Sigmoid colon (tissue), 7 donors: ENCODE measurements at regions of chr9 and their contacts with region 1.

Region 1: DNA sequence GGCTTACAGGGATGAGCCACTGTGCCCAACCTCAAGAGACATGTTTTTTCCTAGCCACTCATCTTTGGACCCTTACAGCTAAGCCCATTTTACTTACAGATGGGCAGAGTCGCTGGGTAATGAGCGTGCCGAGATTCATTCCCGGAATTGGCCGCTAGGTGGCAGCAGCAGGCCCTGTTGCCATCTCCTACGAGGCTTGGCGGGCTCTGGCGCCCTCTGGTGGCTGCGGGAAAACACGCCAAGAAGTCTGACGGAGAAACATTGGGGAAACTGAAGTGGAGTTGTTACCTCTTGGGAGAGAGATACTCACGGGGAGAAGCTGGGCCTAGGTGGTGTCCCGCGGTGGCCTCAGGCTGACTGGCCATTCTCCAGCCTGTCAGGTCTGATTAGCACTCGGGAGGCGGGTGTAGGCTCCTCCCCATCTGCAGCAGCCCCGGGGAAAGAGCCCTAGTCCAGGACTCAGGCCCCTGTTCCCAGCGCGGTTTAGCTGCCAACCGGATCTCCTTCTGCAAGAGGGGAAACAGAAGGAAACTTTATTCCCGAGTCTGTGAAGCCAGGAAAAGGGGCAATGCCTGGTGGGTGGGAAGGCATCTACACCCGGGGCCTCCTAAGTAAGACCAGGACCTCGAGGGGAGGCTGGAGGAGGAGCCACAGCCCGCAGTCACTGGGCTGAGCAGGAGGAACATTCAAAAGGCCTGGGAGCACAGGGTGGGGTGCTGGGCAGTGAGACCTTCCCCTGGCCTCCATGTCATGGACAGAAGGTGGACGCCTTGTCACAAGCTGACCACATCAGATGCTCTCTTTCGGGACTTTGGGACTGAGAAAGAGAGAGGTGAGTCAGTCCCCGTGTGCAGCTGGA is 9.7 kb downstream of the PTGES2 start:
- DNase-seq: peak; percentile 96
- H3K4me3 ChIP-seq: no peak overlapping the region
- H3K27ac ChIP-seq: no peak overlapping the region
- H3K4me1 ChIP-seq: peaks cover 0 to 7% (median 6%) of the 10 kb centered on the region in 4 donors
- H3K27me3 ChIP-seq: no peaks in the 10 kb centered on the region
- CTCF ChIP-seq: peak; percentile 100
- EP300 ChIP-seq: no peak
- POLR2A ChIP-seq: no peak

Region 2: GRCh38 chr9:127943731-127944144 is 174.1 kb before region 1 on chr9:
- intact Hi-C with region 1: loop called (anchors 1 kb)
- DNase-seq: peak; percentile 94
- H3K4me3 ChIP-seq: no peak overlapping the region
- H3K27ac ChIP-seq: peak overlapping the region; percentile 1 to 48 (median 45)
- H3K4me1 ChIP-seq: peaks cover 0 to 38% (median 35%) of the 10 kb centered on the region in 4 donors
- H3K27me3 ChIP-seq: no peaks in the 10 kb centered on the region
- CTCF ChIP-seq: peak; percentile 84 to 97 (median 95)
- EP300 ChIP-seq: no peak
- POLR2A ChIP-seq: no peak

Region 3: DNA sequence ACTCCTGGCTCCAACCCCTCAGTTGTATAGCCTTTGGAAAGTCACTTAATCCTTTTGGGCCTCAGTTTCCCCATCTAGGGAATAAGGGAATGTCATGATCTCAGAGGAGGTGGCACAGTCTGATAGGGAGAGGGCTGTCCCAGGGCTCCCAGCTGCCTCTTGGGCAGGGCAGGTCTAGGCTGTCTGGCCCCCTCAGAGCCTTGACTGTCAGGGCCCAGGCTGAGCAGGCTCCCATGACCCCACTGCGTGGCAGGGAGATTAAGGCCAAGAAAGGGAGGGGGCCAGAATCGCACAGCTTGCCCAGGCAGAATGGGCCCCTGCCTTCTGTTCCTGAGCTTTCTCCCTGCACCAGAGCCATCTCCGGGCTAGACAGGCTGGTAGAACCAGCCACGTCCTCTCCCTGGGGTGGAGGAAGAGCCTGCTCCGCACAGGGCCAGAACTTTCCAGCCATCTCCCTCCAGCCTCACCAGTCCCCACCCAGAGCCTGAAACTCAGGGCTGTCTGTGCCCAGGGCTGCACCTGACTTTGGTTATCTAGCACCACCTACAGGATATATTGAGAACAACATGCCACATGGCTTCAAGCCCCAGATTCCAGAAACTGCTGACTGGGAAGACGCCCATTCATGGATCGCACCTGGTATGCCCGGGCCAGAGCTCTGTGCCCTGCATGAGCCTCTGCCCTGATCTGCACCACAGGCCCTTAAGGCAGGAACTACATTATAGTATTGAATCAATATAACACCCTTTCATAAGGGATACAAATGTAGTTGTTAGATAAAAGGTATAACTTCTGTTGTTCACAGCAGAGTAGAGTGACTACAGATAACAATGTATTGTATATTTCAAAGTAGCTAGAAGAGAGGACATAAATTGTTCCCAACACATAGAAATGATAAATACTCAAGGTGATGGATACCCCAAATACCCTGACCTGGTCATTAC is 82.7 kb before region 1 on chr9:
- intact Hi-C with region 1: loop called (anchors 5 kb)
- DNase-seq: peak; percentile 91
- H3K4me3 ChIP-seq: no peak overlapping the region
- H3K27ac ChIP-seq: no peak overlapping the region
- H3K4me1 ChIP-seq: peaks cover 0 to 5% (median 2%) of the 10 kb centered on the region in 4 donors
- H3K27me3 ChIP-seq: no peaks in the 10 kb centered on the region
- CTCF ChIP-seq: peak; percentile 89 to 96 (median 92)
- EP300 ChIP-seq: no peak
- POLR2A ChIP-seq: no peak

Region 4: DNA sequence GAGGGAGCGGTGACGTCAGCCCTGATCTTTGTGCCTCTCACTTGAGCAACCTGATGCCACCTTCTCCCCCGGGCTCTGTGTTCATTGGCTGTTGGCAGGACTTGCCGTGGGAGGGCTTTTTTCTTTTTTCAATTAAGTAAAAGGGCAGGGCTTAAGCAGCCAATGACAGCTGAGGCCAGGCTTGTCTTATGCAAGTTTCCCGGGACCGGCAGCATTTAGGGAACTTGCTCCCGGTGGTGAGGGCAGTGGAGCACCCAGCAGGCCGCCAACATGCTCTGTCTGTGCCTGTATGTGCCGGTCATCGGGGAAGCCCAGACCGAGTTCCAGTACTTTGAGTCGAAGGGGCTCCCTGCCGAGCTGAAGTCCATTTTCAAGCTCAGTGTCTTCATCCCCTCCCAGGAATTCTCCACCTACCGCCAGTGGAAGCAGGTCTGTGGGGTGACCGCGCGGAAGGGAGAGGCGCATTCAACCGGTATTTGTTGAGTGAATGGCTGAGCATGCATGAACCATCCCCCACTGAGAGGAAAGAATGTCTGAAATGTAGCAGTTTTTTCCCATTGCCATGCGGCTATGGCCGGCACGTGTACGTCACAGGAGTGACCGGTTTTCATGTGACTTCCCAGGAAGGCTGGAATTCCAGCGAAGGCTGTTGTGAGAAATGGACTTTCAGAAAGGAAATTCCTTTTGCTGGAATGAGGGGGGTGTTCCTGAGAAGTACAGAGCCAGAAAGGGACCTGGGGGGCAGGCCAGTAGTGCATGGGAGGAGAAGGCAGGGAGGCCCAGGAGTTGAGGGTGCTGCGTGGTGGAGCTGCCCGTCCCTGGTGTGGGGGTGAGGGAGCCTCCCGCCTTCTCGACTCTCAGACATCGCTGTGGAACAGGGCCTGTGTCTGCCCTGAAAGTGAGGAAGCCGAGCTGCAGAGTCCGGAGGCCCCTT is 19.3 kb before region 1 on chr9:
- intact Hi-C with region 1: loop called (anchors 2 kb)
- DNase-seq: peak; percentile 99
- H3K4me3 ChIP-seq: peak overlapping the region; percentile 28 to 55 (median 47)
- H3K27ac ChIP-seq: peak overlapping the region; percentile 91 to 98 (median 92)
- H3K4me1 ChIP-seq: peaks cover 0 to 66% (median 58%) of the 10 kb centered on the region in 4 donors
- H3K27me3 ChIP-seq: no peaks in the 10 kb centered on the region
- CTCF ChIP-seq: no peak
- EP300 ChIP-seq: peak in 3 of 4 donors; percentile 83 to 91 (median 89)
- POLR2A ChIP-seq: peak; percentile 94 to 96

Region 5: GRCh38 chr9:128150594-128151308 is 32.9 kb after region 1 on chr9:
- intact Hi-C with region 1: no loop called
- DNase-seq: no peak
- H3K4me3 ChIP-seq: no peak overlapping the region
- H3K27ac ChIP-seq: no peak overlapping the region
- H3K4me1 ChIP-seq: peaks cover 0 to 5% (median 0%) of the 10 kb centered on the region in 4 donors
- H3K27me3 ChIP-seq: no peaks in the 10 kb centered on the region
- CTCF ChIP-seq: no peak
- EP300 ChIP-seq: no peak
- POLR2A ChIP-seq: no peak

Region 6: DNA sequence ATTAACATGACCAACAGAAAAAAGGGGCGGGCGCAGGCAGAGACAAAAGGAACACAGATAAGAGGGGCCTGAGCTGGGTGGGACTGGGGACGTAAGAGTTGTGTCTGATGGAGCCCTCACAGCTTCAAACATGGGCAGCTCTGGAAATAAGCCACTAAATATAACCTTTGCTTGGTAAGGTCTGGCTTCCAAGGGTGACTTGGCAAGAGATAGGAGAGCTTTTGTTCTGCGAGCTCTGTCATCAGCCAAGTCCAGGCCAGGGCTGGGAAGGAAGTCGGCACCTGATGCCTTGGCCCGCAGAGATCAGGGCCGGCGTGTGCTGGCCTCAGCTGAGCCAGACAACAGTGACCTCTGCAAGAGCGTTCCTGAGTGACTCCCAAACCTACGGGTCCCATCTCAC is 192.6 kb after region 1 on chr9:
- intact Hi-C with region 1: no loop called
- DNase-seq: no peak
- H3K4me3 ChIP-seq: no peak overlapping the region
- H3K27ac ChIP-seq: no peak overlapping the region
- H3K4me1 ChIP-seq: no peaks in the 10 kb centered on the region
- H3K27me3 ChIP-seq: no peaks in the 10 kb centered on the region
- CTCF ChIP-seq: no peak
- EP300 ChIP-seq: no peak
- POLR2A ChIP-seq: no peak